Ascending aorta (tissue), 2 donors: ENCODE measurements at regions of chr6 and their contacts with region 1.

Region 1: DNA sequence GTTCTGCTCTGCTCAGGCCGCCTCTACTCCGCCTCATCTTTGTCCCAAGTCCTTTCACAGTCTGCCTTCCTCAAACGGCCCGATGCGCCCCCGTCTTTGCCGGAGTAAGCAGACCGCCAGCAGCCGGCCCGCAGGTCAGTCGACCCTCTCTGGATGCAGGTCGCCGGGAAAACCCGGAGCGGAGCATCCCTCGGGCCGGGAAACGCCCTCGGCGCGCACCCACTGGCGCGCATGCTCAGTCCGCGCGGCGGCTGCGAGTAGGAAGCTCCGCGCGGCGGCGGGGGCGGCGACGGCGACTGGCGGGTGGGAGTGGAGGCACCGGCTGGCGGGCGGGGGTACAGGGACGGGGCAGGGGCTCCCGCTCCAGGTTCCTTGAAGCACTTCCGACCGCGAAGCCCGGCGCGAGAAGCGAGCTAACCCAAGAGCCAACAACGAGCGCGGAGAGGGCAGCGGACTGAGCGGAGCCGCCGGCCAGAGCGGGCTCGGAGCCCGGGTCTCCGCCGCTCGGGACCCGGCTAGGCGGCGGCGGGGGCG is at the start of gene LRRC1:
- DNase-seq: peak; percentile 59 to 96
- H3K4me3 ChIP-seq: peak within 1 kb of the TSS; percentile 84 to 93
- H3K27ac ChIP-seq: peak within 1 kb of the TSS; percentile 74 to 91
- H3K4me1 ChIP-seq: peaks cover 3 to 5% of the 10 kb centered on the region in 2 donors
- H3K27me3 ChIP-seq: no peaks in the 10 kb centered on the region
- CTCF ChIP-seq: no peak
- total RNA-seq, gene LRRC1: 16.3 TPM

Region 2: DNA sequence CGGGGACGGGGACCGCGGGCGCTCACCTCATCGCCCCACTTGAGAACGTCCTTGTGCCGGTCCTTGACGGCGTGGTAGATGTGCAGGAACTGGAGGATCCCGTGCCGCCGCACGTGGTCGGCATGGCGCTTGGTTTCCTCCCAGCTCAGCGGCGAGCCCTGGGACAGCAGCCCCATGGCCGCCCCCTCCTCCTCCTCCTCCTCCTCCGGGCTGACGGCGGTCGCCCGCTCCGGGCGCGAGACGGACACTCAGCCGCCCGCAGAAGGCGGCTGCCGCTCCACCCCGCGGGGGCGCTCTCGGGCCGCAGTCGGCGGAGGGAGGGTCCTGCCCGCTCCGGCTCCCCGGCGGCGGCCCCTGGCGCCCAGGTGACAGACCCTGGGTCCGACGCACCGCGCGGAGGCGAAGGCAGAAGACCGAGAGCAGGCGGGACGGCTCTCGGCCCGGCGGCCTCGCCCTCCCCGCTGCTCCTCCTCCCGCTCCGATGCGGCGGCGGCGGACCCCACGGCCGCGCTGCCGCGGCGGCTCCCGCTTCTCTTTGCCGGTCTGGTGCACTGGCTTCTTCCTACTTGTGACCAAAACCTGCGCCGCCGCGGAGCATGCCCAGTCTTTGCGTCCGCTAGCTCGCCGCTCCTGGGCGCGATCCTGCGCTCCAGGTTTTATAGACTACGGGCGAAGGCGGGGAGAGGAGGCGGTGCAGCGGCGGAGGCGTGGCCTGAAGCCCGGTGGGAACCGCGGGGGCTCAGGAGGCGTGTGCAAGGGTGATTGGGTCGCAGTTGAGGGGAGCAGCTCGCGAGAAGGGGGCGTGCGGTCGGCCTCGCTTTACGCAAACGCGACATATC is 250.1 kb before region 1 on chr6 and contains the start of gene GCLC:
- intact Hi-C with region 1: loop called (anchors 5 kb)
- DNase-seq: peak; percentile 79 to 97
- H3K4me3 ChIP-seq: peak within 1 kb of the TSS; percentile 81 to 96
- H3K27ac ChIP-seq: peak within 1 kb of the TSS; percentile 89 to 93
- H3K4me1 ChIP-seq: peaks cover 0 to 14% of the 10 kb centered on the region in 2 donors
- H3K27me3 ChIP-seq: no peaks in the 10 kb centered on the region
- CTCF ChIP-seq: peak in 2 of 3 experiments; percentile 60 to 72
- total RNA-seq, gene GCLC: 54.9 TPM

Region 3: GRCh38 chr6:53829698-53830221 is 35.0 kb after region 1 on chr6:
- intact Hi-C with region 1: loop called (anchors 5 kb)
- DNase-seq: no peak
- H3K4me3 ChIP-seq: no peak overlapping the region
- H3K27ac ChIP-seq: peak overlapping the region in 1 of 2 donors; percentile 8
- H3K4me1 ChIP-seq: peaks cover 0 to 42% of the 10 kb centered on the region in 2 donors
- H3K27me3 ChIP-seq: no peaks in the 10 kb centered on the region
- CTCF ChIP-seq: no peak

Region 4: DNA sequence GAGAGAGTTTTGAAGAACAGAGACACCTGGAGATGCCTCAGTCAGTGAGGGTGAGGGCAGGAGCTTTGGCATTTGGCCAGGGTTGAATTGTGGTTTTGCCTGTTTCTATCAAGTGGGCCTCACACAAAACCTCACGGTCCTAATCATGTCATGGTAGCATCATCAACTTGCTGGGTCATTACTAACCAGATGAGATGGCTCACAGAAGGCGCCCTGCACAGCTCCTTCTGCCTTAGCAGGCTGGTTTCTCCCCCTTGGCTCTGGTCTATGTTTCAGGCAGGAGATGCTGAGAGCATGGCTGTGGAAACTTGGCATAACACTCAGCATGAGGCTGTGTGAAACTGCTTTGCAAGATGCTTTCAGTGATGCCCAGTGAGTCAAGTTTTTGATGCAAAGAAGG is 99.3 kb after region 1 on chr6:
- intact Hi-C with region 1: loop called (anchors 5 kb)
- DNase-seq: no peak
- H3K4me3 ChIP-seq: no peak overlapping the region
- H3K27ac ChIP-seq: no peak overlapping the region
- H3K4me1 ChIP-seq: peaks cover 0 to 5% of the 10 kb centered on the region in 2 donors
- H3K27me3 ChIP-seq: no peaks in the 10 kb centered on the region
- CTCF ChIP-seq: no peak